Activated naive CD4-positive, alpha-beta T cell treated with anti-CD3 and anti-CD28 coated beads for 36 hours (primary cell): ENCODE measurements at regions of chr2 and their contacts with region 1.

Region 1: GRCh38 chr2:168346725-168347477 is 99.5 kb upstream of the STK39 start:
- DNase-seq: peak; percentile 83
- H3K4me3 Mint-ChIP-seq: peak overlapping the region; percentile 74
- H3K27ac Mint-ChIP-seq: no peak overlapping the region
- H3K4me1 Mint-ChIP-seq: peaks cover 4% of the 10 kb centered on the region
- H3K27me3 Mint-ChIP-seq: no peaks in the 10 kb centered on the region

Region 2: GRCh38 chr2:167769020-167769419 is 577.9 kb before region 1 on chr2:
- CTCF ChIA-PET with region 1: no interaction called
- intact Hi-C with region 1: no loop called
- DNase-seq: no peak
- H3K4me3 Mint-ChIP-seq: no peak overlapping the region
- H3K27ac Mint-ChIP-seq: no peak overlapping the region
- H3K4me1 Mint-ChIP-seq: no peaks in the 10 kb centered on the region
- H3K27me3 Mint-ChIP-seq: no peaks in the 10 kb centered on the region

Region 3: DNA sequence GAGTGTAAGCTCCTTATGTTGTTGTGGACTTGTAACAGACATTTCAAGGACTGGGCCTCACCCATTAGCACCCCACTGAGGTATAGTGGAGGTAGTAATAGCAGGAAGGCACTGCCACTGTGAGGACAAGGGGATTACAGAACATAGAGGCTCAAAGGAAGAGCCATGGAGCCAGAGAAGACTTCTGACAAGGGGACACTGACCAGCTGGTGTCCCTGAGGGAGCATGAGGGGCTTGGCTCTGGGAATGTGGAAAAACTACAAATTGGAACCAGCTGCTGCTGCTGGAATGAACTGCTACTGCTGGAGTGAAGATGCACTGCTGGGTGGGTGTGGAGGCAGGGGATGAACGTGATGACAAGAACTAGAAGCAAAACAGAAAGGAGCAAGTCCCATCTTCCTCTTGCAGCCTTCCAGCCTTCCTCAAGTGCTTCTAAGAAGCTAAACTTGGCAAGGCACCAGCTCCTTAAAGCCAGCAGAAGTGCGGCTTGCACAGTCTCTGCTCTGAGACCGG is 288.2 kb after region 1 on chr2:
- CTCF ChIA-PET with region 1: no interaction called
- intact Hi-C with region 1: loop called (anchors 2 kb)
- DNase-seq: no peak
- H3K4me3 Mint-ChIP-seq: no peak overlapping the region
- H3K27ac Mint-ChIP-seq: no peak overlapping the region
- H3K4me1 Mint-ChIP-seq: peaks cover 17% of the 10 kb centered on the region
- H3K27me3 Mint-ChIP-seq: no peaks in the 10 kb centered on the region

Region 4: GRCh38 chr2:168687314-168687713 is 340.4 kb after region 1 on chr2:
- CTCF ChIA-PET with region 1: interaction called, 17 read pairs
- intact Hi-C with region 1: loop called (anchors 1 kb)
- DNase-seq: peak; percentile 53
- H3K4me3 Mint-ChIP-seq: no peak overlapping the region
- H3K27ac Mint-ChIP-seq: no peak overlapping the region
- H3K4me1 Mint-ChIP-seq: no peaks in the 10 kb centered on the region
- H3K27me3 Mint-ChIP-seq: no peaks in the 10 kb centered on the region

Region 5: GRCh38 chr2:168705534-168706470 is 358.9 kb after region 1 on chr2:
- CTCF ChIA-PET with region 1: interaction called, 12 read pairs
- intact Hi-C with region 1: loop called (anchors 1 kb)
- DNase-seq: no peak
- H3K4me3 Mint-ChIP-seq: no peak overlapping the region
- H3K27ac Mint-ChIP-seq: no peak overlapping the region
- H3K4me1 Mint-ChIP-seq: no peaks in the 10 kb centered on the region
- H3K27me3 Mint-ChIP-seq: no peaks in the 10 kb centered on the region

Region 6: GRCh38 chr2:168758970-168759820 is 412.3 kb after region 1 on chr2:
- CTCF ChIA-PET with region 1: interaction called, 13 read pairs
- intact Hi-C with region 1: loop called (anchors 1 kb)
- DNase-seq: peak; percentile 41
- H3K4me3 Mint-ChIP-seq: no peak overlapping the region
- H3K27ac Mint-ChIP-seq: no peak overlapping the region
- H3K4me1 Mint-ChIP-seq: peaks cover 30% of the 10 kb centered on the region
- H3K27me3 Mint-ChIP-seq: no peaks in the 10 kb centered on the region

Region 7: GRCh38 chr2:168849610-168850009 is 502.7 kb after region 1 on chr2:
- CTCF ChIA-PET with region 1: no interaction called
- intact Hi-C with region 1: loop called (anchors 1 kb)
- DNase-seq: peak; percentile 14
- H3K4me3 Mint-ChIP-seq: no peak overlapping the region
- H3K27ac Mint-ChIP-seq: no peak overlapping the region
- H3K4me1 Mint-ChIP-seq: no peaks in the 10 kb centered on the region
- H3K27me3 Mint-ChIP-seq: no peaks in the 10 kb centered on the region

Region 8: DNA sequence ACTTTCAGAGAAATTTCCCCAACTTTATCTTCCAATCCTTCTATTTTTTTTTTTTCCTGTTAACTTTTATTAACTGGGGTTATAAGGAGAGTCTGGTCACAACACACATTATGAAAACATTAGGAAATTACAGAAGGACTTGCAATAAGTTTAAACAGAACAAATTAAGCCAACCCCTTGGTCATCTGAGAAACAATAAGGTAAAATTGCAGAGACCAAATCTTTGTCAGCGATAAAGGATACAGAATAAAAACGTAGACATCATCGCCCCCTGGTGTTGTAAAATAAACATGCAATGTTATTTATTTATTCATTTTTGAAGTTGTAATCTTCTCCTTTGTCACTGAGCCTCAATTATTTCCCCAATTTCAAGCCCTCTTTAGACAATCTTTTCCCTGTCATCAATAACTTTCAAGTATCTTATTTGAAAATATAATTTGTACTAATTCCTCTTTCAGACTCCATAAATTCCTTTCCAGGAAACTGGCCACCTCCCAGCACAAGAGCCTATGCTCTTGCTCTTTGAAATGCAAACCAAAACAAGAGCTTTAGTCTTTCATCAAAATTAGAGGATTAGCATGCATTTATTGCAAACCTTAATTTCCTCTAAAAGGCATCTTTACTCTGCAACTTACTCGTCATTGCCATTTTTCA is 573.7 kb after region 1 on chr2:
- CTCF ChIA-PET with region 1: interaction called, 9 read pairs
- intact Hi-C with region 1: loop called (anchors 1 kb)
- DNase-seq: no peak
- H3K4me3 Mint-ChIP-seq: no peak overlapping the region
- H3K27ac Mint-ChIP-seq: no peak overlapping the region
- H3K4me1 Mint-ChIP-seq: peaks cover 4% of the 10 kb centered on the region
- H3K27me3 Mint-ChIP-seq: peaks cover 8% of the 10 kb centered on the region